ENCODE measurements at regions of chr4 and their contacts with region 1.

Region 1: DNA sequence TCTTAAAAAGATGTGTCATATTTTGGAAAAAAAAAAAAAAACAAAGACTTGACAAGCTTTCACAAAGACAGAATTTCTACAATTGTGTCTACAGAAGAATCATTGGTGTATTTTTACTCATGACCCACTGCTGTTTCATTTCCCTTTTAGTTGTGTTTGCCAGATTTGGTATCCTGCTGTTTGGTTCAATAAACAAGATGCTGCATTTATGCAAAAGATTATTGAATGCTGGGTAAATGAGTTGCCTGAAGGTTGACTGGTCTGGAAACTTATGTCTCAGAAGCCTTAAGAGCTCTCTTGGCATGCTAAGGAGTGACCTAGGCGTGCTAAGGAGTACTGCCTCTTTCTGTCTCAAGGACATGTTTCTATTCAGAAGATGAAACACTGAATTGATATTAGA is 64.9 kb upstream of the NPY2R start:
- DNase-seq: no peak
- ATAC-seq: no peak

Region 2: DNA sequence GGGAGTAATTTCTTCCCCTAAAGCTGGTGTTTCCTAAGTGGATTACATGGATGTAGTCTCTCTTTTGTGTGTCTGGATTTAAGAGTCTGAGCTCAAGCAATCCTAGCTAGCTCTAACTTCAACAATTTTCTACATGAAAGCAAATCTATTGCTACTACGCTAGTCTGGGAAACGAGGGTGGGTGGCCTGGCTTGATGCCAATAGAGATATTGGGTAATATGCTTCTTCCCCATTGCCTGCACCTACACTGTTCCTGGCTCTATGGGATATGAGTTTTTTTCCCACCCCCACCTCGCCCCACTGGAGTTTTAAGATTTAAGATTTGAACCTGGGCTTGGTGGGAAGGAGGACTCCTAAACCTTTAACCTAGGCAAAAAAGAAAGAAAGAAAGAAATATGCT is 203.7 kb before region 1 on chr4:
- intact Hi-C with region 1: loop called (anchors 5 kb)
- DNase-seq: no peak
- ATAC-seq: no peak

Region 3: GRCh38 chr4:155060419-155060818 is 83.1 kb before region 1 on chr4:
- intact Hi-C with region 1: no loop called
- DNase-seq: no peak
- ATAC-seq: peak; percentile 36

Region 4: DNA sequence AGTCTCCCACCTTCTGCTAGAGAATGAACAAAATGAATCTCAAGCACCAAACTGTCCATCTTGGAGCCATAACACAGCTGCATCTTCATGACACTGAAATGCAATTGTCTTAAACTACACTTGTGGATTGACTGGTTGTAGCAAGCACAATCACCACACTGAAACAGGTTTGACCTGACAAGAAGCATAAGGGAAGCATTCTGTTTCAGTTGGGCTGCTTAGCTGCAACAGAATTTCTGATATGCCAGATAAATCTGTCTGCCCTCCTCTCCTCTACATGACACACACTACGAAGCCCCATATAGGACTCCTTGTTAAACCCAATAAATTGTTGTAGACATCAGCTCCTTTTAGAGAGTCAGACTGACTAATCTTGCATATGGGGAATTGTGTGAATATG is 36.9 kb before region 1 on chr4:
- intact Hi-C with region 1: no loop called
- DNase-seq: no peak
- ATAC-seq: no peak

Region 5: GRCh38 chr4:155122382-155122781 is 21.1 kb before region 1 on chr4:
- intact Hi-C with region 1: no loop called
- DNase-seq: no peak
- ATAC-seq: no peak